GM12878 (cell line): ENCODE measurements at regions of chr1 and their contacts with region 1.

Region 1: DNA sequence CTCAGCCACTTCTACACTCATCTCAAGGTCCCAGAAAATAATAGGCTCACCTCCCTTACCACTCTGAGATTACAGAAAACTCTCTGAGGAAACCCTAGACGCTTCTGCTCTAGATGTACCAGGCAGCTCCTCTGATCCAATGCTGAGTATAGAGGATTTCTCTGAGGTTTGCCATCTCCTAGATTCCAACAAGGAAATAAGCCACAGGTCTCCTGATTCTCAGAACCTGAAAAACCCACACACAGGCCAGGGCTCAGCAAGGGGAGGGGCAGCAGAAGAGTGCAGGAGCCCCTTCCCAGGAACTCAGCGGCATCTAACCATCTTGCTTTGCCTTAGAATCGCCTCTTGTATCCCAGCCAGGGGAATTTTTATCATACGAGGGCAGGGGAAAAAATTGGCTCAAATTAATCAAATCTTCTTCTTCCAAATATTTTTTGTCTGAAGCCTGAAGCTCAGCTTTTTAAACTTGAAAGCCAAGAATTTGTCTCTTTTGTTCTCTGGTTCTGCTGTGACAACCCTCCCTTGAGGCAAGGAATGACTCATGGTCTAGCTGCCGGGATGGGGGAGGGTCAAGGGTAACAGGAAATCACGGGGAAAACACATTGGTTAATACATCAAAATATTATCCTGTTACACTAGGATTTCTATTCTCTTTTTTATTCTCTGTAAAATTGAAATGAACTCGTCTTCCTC is 30.8 kb downstream of the GORAB start:
- DNase-seq: peak; percentile 21
- ATAC-seq: peak; percentile 83
- H3K4me3 ChIP-seq: no peak overlapping the region
- H3K27ac ChIP-seq: peak overlapping the region; percentile 1; the same call in 1 of the 2 replicates
- H3K4me1 ChIP-seq: no peaks in the 10 kb centered on the region; the same call in 1 of the 2 replicates
- H3K27me3 ChIP-seq: no peaks in the 10 kb centered on the region
- CTCF ChIP-seq: no peak
- EP300 ChIP-seq: peak; percentile 45 to 46; a peak in 2 of 4 replicates
- POLR2A ChIP-seq: no peak
- RAD21 ChIP-seq: no peak

Region 2: DNA sequence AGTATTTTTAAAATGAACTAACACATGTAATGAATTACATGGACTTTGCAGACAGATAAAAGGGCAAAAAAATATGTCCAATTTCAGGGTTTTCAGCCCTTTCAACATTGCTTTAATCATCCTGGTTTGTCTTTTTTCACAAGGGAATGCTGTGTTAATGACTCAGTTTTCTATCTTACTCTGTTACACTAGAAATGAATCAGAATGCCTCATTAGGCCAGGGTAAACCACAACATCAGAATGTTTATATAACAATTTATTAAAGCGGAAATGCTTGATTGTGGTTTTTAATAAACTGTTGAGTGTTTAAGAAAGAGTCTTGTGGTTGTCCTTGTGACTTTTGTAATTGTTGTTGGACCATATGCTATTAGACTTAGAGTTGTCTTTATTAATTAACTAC is 17.3 kb before region 1 on chr1:
- CTCF ChIA-PET with region 1: no interaction called
- POLR2A ChIA-PET with region 1: interaction called, 4 read pairs
- RAD21 ChIA-PET with region 1: interaction called, 4 read pairs
- SMC1A ChIA-PET with region 1: interaction called, 27 read pairs
- in situ Hi-C with region 1: no loop called
- intact Hi-C with region 1: no loop called
- DNase-seq: no peak
- ATAC-seq: peak; percentile 54
- H3K4me3 ChIP-seq: no peak overlapping the region
- H3K27ac ChIP-seq: no peak overlapping the region
- H3K4me1 ChIP-seq: no peaks in the 10 kb centered on the region
- H3K27me3 ChIP-seq: no peaks in the 10 kb centered on the region
- CTCF ChIP-seq: no peak
- EP300 ChIP-seq: peak; percentile 11 to 91; a peak in 2 of 4 replicates
- POLR2A ChIP-seq: no peak
- RAD21 ChIP-seq: no peak

Region 3: GRCh38 chr1:170586321-170587252 is 23.8 kb after region 1 on chr1:
- CTCF ChIA-PET with region 1: no interaction called
- POLR2A ChIA-PET with region 1: interaction called, 3 read pairs
- RAD21 ChIA-PET with region 1: interaction called, 3 read pairs
- SMC1A ChIA-PET with region 1: interaction called, 13 read pairs
- in situ Hi-C with region 1: no loop called
- intact Hi-C with region 1: no loop called
- DNase-seq: no peak
- ATAC-seq: peak; percentile 74
- H3K4me3 ChIP-seq: no peak overlapping the region
- H3K27ac ChIP-seq: no peak overlapping the region
- H3K4me1 ChIP-seq: no peaks in the 10 kb centered on the region
- H3K27me3 ChIP-seq: no peaks in the 10 kb centered on the region
- CTCF ChIP-seq: no peak
- EP300 ChIP-seq: no peak
- POLR2A ChIP-seq: no peak
- RAD21 ChIP-seq: no peak